IMR-90 (cell line): ENCODE measurements at regions of chr11 and their contacts with region 1.

Region 1: GRCh38 chr11:66001942-66002647 is at the starts of genes BANF1 and EIF1AD:
- DNase-seq: peak; percentile 98
- ATAC-seq: peak; percentile 90
- H3K4me3 ChIP-seq: peak within 1 kb of the TSS; percentile 71
- H3K27ac ChIP-seq: peak within 1 kb of the TSS; percentile 96
- H3K4me1 ChIP-seq: no peaks in the 10 kb centered on the region
- H3K27me3 ChIP-seq: no peaks in the 10 kb centered on the region
- CTCF ChIP-seq: no peak
- POLR2A ChIP-seq: peak; percentile 79
- RAD21 ChIP-seq: no peak; the same call in 1 of the 2 replicates
- total RNA-seq, gene BANF1: 35.0 and 36.6 TPM in 2 replicates
- total RNA-seq, gene EIF1AD: 43.0 and 62.6 TPM in 2 replicates

Region 2: DNA sequence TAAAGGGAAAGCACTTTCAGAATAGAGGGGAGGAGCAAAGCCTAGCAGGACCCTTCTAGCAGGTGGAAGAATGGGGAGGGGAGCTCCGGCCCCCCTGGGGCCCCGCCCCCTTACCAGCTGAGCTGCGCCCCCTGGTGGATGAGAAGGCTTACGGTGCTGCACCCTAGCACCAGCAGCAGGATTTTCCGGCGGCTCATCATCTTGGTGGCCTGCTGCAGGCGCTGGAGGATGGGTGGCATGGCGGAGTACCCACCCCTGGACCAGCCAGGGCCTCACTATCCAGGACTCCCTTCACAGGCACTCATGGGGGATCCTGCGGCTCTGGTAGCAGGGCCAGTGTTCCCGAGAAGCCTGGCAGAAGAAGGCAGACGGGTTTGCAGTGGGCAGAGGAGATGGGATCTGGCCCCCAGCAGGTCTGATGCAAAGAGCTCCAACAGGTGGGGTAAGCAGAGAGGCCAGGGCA is 43.1 kb after region 1 on chr11:
- CTCF ChIA-PET with region 1: interaction called, 5 read pairs
- POLR2A ChIA-PET with region 1: no interaction called
- dilution Hi-C with region 1: no loop called
- in situ Hi-C with region 1: no loop called
- intact Hi-C with region 1: loop called (anchors 2 kb)
- DNase-seq: peak; percentile 70
- ATAC-seq: peak; percentile 96
- H3K4me3 ChIP-seq: no peak overlapping the region
- H3K27ac ChIP-seq: no peak overlapping the region
- H3K4me1 ChIP-seq: no peaks in the 10 kb centered on the region
- H3K27me3 ChIP-seq: peaks cover 31% of the 10 kb centered on the region
- CTCF ChIP-seq: peak; percentile 88
- POLR2A ChIP-seq: no peak
- RAD21 ChIP-seq: peak; percentile 58